H1 (cell line): ENCODE measurements at regions of chr11 and their contacts with region 1.

Region 1: DNA sequence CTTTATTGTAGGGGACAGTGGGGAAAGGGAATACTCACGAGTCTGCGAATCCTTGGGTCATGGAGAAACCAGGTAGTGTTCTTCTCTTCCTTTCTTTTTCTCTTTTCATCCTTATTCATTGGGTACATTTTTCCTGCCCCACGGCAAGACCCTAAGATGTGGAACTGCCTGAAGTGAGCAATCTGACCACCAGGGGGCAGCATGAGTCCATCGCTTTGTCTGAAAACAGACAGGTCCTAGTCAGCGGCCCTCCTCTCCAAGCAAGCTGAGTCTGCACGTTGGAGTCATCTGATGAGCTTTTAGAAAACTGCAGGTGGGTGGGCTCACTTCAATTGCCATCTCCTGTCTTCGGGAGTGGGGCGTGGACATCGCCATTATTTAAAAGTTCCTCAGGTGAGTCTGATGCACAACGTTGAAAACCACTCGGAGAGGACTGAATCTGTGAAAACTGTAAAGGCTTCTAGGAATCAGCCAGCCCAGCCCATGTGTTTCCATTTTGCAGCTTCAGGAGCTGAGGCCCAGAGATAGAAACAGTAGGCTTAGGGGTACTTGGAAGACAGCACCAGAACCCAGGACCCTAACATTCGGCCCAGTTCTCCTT is 34.0 kb upstream of the FBXO3 start:
- DNase-seq: peak; percentile 80 to 99
- H3K4me3 ChIP-seq: no peak overlapping the region
- H3K27ac ChIP-seq: no peak overlapping the region
- H3K4me1 ChIP-seq: no peaks in the 10 kb centered on the region
- H3K27me3 ChIP-seq: no peaks in the 10 kb centered on the region
- CTCF ChIP-seq: peak; percentile 84 to 89 (median 85)
- EP300 ChIP-seq: no peak
- POLR2A ChIP-seq: no peak
- RAD21 ChIP-seq: peak; percentile 91 to 92

Region 2: GRCh38 chr11:33819278-33819677 is 10.9 kb after region 1 on chr11:
- CTCF ChIA-PET with region 1: interaction called, 83 read pairs
- POLR2A ChIA-PET with region 1: no interaction called
- DNase-seq: no peak
- H3K4me3 ChIP-seq: no peak overlapping the region
- H3K27ac ChIP-seq: no peak overlapping the region
- H3K4me1 ChIP-seq: no peaks in the 10 kb centered on the region
- H3K27me3 ChIP-seq: no peaks in the 10 kb centered on the region
- CTCF ChIP-seq: no peak
- EP300 ChIP-seq: no peak
- POLR2A ChIP-seq: no peak
- RAD21 ChIP-seq: no peak

Region 3: DNA sequence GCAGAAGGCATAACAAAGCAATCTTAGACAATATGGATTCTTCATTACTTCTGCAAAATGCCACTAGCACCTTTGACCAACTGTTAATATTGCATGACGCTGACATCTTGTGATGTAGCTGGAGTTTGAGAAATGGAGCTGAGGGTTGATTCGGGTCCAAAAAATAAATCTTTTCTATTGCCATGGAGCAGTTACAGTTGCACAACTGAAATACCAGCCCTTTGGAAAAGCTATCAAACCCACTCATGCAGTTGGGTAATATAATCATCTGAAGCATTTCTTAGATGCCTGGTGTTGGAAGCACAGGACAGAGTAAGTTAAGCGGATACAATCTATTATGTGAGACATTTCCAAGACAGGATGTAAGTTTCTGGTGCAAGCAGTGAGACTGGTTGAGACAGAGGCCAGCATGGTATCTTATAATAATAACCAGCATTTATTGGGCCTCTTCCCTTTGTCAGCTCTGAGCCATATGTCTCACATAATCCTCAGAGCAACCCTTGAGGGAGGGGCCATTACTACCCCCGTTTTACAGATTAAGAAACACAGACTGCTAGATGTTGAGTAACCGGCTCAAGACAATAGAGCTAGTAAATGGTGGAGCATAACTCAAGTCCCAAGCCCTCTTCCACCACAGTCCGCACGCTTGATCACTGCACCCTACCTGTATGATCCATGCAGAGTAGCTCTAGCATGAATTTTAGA is 168.3 kb after region 1 on chr11:
- CTCF ChIA-PET with region 1: interaction called, 29 read pairs
- POLR2A ChIA-PET with region 1: no interaction called
- DNase-seq: no peak
- H3K4me3 ChIP-seq: no peak overlapping the region
- H3K27ac ChIP-seq: no peak overlapping the region
- H3K4me1 ChIP-seq: no peaks in the 10 kb centered on the region
- H3K27me3 ChIP-seq: no peaks in the 10 kb centered on the region
- CTCF ChIP-seq: no peak
- EP300 ChIP-seq: no peak
- POLR2A ChIP-seq: no peak
- RAD21 ChIP-seq: no peak